ENCODE measurements at regions of chr3 and their contacts with region 1.

Region 1: DNA sequence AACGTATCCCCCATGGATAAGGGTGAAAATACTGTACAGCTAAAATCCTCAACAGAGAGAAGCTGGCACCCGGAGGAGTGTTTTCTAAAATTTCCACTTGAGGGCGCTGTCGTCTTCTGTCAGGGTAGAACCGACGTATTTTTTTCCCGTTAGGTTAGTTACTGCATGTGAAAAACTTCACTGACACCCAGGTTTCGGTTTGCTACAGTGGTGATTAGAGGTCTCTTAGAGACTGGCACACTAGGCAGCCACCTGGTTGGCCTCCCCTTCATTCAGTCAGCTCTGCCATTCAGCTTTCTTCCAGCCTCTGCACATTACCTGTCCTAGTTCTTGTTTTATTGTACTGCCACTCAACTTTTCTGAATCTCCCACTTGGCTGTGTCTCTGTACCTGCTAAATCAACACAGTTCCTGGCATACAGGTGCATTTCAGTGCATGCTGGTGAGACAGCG is 18.4 kb downstream of the CCK start:
- DNase-seq: peak; percentile 88
- H3K4me3 Mint-ChIP-seq: no peak overlapping the region
- H3K27ac Mint-ChIP-seq: no peak overlapping the region
- H3K4me1 Mint-ChIP-seq: peaks cover 3% of the 10 kb centered on the region
- H3K27me3 Mint-ChIP-seq: peaks cover 24% of the 10 kb centered on the region

Region 2: GRCh38 chr3:42195879-42196330 is 51.7 kb before region 1 on chr3:
- intact Hi-C with region 1: no loop called
- DNase-seq: no peak
- H3K4me3 Mint-ChIP-seq: no peak overlapping the region
- H3K27ac Mint-ChIP-seq: no peak overlapping the region
- H3K4me1 Mint-ChIP-seq: peaks cover 26% of the 10 kb centered on the region
- H3K27me3 Mint-ChIP-seq: no peaks in the 10 kb centered on the region

Region 3: DNA sequence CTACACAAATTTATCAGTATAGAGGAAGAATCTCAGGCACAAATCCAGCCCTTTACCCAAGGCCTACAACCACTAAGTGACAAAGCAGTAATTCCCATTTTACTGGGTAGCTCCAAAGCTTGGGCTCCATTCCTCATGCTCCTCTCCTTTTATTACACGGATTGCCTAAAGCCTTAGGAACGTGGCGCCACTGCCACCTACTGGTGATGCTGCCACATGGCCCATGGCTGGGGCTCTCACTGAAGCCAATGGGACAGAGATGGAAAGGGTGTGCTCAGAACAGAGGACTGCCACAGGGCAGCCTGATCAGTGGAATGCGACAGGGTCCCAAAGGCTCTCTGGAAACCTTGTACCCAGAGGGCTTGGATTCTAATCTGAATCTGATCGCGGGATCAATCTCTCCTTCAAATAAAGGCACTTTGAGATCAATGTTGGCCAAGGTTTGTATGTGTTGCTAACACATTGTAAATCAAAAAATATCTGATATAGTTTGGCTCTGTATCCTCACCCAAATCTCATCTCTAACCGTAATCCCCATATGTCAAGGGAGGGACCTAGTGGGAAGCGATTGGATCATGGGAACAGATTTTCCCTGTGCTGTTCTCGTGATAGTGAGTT is 196.3 kb after region 1 on chr3:
- intact Hi-C with region 1: loop called (anchors 1 kb)
- DNase-seq: peak; percentile 93
- H3K4me3 Mint-ChIP-seq: no peak overlapping the region
- H3K27ac Mint-ChIP-seq: no peak overlapping the region
- H3K4me1 Mint-ChIP-seq: no peaks in the 10 kb centered on the region
- H3K27me3 Mint-ChIP-seq: peaks cover 7% of the 10 kb centered on the region

Region 4: GRCh38 chr3:42547401-42547945 is 299.9 kb after region 1 on chr3:
- intact Hi-C with region 1: loop called (anchors 5 kb)
- DNase-seq: peak; percentile 89
- H3K4me3 Mint-ChIP-seq: no peak overlapping the region
- H3K27ac Mint-ChIP-seq: no peak overlapping the region
- H3K4me1 Mint-ChIP-seq: peaks cover 10% of the 10 kb centered on the region
- H3K27me3 Mint-ChIP-seq: no peaks in the 10 kb centered on the region